ENCODE measurements at regions of chr12 and their contacts with region 1.

Region 1: DNA sequence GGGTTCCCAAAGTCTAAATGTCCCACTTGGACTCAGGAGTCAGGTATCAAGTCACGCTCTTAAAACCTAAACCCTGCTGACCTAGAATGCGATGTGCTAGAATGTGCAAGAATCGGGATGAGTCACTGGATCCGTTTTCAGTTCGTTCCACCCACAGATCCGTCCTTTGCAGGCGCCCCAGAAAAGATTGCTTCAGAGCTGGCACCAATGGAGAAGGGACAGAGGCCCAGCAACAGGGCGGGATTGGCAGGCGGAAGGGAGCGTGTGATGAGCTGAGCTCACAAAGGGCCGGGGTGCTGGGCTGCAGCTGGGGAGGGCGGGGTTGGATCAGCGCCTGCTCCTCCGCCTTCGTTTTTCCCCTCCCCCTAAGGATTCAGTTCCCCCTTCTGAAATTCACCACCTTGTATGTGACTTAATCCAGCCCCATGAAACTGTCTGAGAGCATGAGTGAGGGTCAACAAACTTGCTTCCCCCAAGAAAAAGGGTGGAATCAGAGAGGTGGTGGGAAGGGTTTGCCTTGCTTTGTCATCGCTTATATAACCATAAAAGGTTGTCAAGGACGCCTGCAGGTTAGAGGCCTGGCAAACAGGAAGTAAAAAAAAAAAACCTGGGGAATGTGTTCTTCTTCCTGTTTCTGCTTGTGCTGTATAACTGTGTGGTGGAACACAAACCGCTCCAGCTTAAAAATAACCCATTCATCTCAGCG is 2.8 kb upstream of the UBC start:
- DNase-seq: peak; percentile 73 to 97 (median 93)
- ATAC-seq: peak; percentile 81
- H3K4me3 ChIP-seq: peak overlapping the region; percentile 60
- H3K4me3 Mint-ChIP-seq: peak overlapping the region; percentile 83 to 100 (median 88)
- H3K27ac ChIP-seq: peak overlapping the region; percentile 84
- H3K27ac Mint-ChIP-seq: peak overlapping the region; percentile 90 to 100 (median 98)
- H3K4me1 ChIP-seq: peaks cover 57 to 70% of the 10 kb centered on the region in 2 donors
- H3K4me1 Mint-ChIP-seq: peaks cover 64 to 98% (median 90%) of the 10 kb centered on the region in 7 donors
- H3K27me3 ChIP-seq: no peaks in the 10 kb centered on the region
- H3K27me3 Mint-ChIP-seq: peaks cover 0 to 16% (median 0%) of the 10 kb centered on the region in 5 donors

Region 2: GRCh38 chr12:124927201-124928094 is 10.2 kb after region 1 on chr12:
- CTCF ChIA-PET with region 1: interaction called, 9 read pairs
- POLR2A ChIA-PET with region 1: interaction called, 764 read pairs
- intact Hi-C with region 1: loop called (anchors 1 kb)
- DNase-seq: peak; percentile 86 to 95 (median 92)
- ATAC-seq: peak; percentile 93
- H3K4me3 ChIP-seq: peak overlapping the region; percentile 91
- H3K4me3 Mint-ChIP-seq: peak overlapping the region; percentile 84 to 97 (median 93)
- H3K27ac ChIP-seq: peak overlapping the region; percentile 65
- H3K27ac Mint-ChIP-seq: peak overlapping the region; percentile 90 to 100 (median 98)
- H3K4me1 ChIP-seq: peaks cover 15 to 18% of the 10 kb centered on the region in 2 donors
- H3K4me1 Mint-ChIP-seq: peaks cover 18 to 37% (median 32%) of the 10 kb centered on the region in 7 donors
- H3K27me3 ChIP-seq: no peaks in the 10 kb centered on the region
- H3K27me3 Mint-ChIP-seq: peaks cover 0 to 9% (median 0%) of the 10 kb centered on the region in 5 donors

Region 3: DNA sequence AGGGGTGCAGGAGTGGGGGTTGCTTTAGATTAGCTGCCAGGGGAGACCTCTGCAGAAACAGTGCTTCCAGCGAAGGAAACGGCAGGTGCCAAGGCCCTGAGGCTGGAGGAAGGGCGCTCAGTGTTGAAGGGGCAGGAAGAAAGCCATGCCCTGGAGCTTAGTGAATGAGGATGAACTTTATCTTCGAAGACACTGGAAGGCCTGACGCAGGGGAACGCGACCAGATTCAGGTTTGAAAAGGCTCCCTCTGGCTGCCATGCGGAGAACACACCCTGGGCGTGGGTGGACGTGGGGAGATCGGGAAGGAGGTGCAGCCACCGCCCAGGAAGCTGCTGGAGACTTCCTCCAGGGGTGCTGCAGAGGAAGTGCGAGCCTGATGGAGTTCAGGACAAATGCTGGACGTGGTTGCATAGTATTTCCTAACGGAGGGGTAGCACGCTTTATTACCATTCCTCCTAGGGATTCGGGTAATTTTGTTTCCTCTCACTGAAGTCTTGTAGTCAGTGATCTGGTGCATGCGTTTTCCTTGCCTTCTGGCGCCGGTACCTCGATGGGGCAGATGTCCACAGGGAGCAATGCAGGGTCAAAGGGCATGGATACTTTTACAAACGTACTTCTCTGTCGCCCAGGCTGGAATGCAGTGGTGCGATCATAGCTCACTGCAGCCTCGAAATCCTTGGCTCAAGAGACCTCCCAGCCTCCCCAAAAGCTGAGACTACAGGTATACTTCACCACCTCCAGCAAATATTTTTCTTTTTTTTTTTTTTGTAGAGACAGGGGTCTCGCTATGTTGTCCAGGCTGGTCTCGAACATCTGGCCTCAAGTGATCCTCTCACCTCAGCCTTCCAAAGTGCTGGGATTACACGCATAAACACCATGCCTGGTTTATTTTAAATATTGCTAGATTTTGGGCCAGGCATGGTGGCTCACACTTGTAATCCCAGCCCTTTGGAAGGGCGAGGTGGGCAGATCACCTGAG is 23.6 kb after region 1 on chr12:
- CTCF ChIA-PET with region 1: interaction called, 205 read pairs
- POLR2A ChIA-PET with region 1: interaction called, 764 read pairs
- intact Hi-C with region 1: loop called (anchors 1 kb)
- DNase-seq: peak; percentile 48 to 85 (median 78)
- ATAC-seq: peak; percentile 74
- H3K4me3 ChIP-seq: peak overlapping the region; percentile 97
- H3K4me3 Mint-ChIP-seq: no peak overlapping the region
- H3K27ac ChIP-seq: peak overlapping the region; percentile 66
- H3K27ac Mint-ChIP-seq: no peak overlapping the region
- H3K4me1 ChIP-seq: peaks cover 19 to 26% of the 10 kb centered on the region in 2 donors
- H3K4me1 Mint-ChIP-seq: peaks cover 0 to 22% (median 0%) of the 10 kb centered on the region in 7 donors
- H3K27me3 ChIP-seq: no peaks in the 10 kb centered on the region
- H3K27me3 Mint-ChIP-seq: no peaks in the 10 kb centered on the region

Region 4: DNA sequence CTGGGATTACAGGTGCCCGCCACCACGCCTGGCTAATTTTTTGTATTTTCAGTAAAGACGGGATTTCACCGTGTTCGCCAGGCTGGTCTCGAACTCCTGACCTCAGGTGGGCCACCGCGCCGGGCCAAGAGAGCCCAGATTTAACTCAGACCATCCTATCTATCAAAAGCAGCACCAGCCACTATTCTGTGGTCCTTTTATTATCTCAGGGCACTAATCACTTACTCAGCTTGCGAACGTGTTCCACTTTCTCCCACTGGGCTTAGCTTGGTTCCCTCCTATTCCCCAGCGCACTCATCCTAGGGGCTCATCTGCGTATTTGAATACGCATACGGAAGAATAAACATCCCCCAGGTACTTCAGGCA is 131.8 kb after region 1 on chr12:
- CTCF ChIA-PET with region 1: no interaction called
- POLR2A ChIA-PET with region 1: interaction called, 5 read pairs
- intact Hi-C with region 1: loop called in 1 of 2 experiments (anchors 1 kb)
- DNase-seq: no peak
- ATAC-seq: no peak
- H3K4me3 ChIP-seq: peak overlapping the region; percentile 94
- H3K4me3 Mint-ChIP-seq: peak overlapping the region; percentile 78 to 97 (median 92)
- H3K27ac ChIP-seq: peak overlapping the region; percentile 71
- H3K27ac Mint-ChIP-seq: peak overlapping the region; percentile 42 to 95 (median 92)
- H3K4me1 ChIP-seq: peaks cover 0 to 5% of the 10 kb centered on the region in 2 donors
- H3K4me1 Mint-ChIP-seq: peaks cover 0 to 11% (median 7%) of the 10 kb centered on the region in 7 donors
- H3K27me3 ChIP-seq: no peaks in the 10 kb centered on the region
- H3K27me3 Mint-ChIP-seq: no peaks in the 10 kb centered on the region

Measured in naive thymus-derived CD4-positive, alpha-beta T cell (primary cell).